SK-N-SH (cell line): ENCODE measurements at regions of chr19 and their contacts with region 1.

Region 1: GRCh38 chr19:12736995-12737834 is at the start of gene GET3:
- DNase-seq: peak; percentile 86
- H3K4me3 ChIP-seq: peak within 1 kb of the TSS; percentile 83 to 84
- H3K27ac ChIP-seq: peak within 1 kb of the TSS; percentile 84 to 96
- H3K4me1 ChIP-seq: peaks cover 9 to 28% of the 10 kb centered on the region in 2 experiments; a peak in 1 of 4 replicates
- H3K27me3 ChIP-seq: no peaks in the 10 kb centered on the region
- CTCF ChIP-seq: no peak
- EP300 ChIP-seq: no peak
- RAD21 ChIP-seq: no peak
- polyA plus RNA-seq, gene GET3: 250 and 264 TPM in 2 replicates

Region 2: DNA sequence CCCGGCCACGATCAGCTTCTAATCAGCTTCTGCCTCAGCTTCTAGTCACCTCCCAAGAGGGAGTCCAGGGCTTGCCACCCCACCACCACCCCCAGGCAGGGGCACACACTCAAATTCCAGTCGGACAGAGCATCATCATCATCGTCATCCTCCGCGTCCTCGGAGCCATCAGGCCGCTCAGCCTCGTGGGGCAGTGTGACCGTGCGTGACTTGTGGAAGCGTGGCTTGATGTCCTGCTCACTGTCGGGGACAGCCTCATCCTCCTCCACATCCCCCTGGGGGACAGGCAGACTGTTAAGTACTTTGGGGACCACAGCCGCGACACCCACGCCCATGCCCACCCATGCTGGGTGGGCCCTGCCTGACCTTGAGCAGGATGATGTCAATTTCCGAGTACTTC is 26.0 kb before region 1 on chr19:
- CTCF ChIA-PET with region 1: no interaction called
- POLR2A ChIA-PET with region 1: no interaction called
- DNase-seq: no peak
- H3K4me3 ChIP-seq: no peak overlapping the region
- H3K27ac ChIP-seq: no peak overlapping the region
- H3K4me1 ChIP-seq: no peaks in the 10 kb centered on the region
- H3K27me3 ChIP-seq: no peaks in the 10 kb centered on the region
- CTCF ChIP-seq: no peak
- EP300 ChIP-seq: no peak
- RAD21 ChIP-seq: no peak

Region 3: GRCh38 chr19:12722566-12723380 is 14.4 kb before region 1 on chr19:
- CTCF ChIA-PET with region 1: interaction called, 25 read pairs
- POLR2A ChIA-PET with region 1: interaction called, 6 read pairs
- DNase-seq: peak; percentile 96
- H3K4me3 ChIP-seq: peak overlapping the region; percentile 63 to 85
- H3K27ac ChIP-seq: peak overlapping the region; percentile 89
- H3K4me1 ChIP-seq: peaks cover 7 to 8% of the 10 kb centered on the region in 2 experiments; a peak in 3 of 4 replicates
- H3K27me3 ChIP-seq: no peaks in the 10 kb centered on the region
- CTCF ChIP-seq: no peak
- EP300 ChIP-seq: no peak
- RAD21 ChIP-seq: no peak

Region 4: DNA sequence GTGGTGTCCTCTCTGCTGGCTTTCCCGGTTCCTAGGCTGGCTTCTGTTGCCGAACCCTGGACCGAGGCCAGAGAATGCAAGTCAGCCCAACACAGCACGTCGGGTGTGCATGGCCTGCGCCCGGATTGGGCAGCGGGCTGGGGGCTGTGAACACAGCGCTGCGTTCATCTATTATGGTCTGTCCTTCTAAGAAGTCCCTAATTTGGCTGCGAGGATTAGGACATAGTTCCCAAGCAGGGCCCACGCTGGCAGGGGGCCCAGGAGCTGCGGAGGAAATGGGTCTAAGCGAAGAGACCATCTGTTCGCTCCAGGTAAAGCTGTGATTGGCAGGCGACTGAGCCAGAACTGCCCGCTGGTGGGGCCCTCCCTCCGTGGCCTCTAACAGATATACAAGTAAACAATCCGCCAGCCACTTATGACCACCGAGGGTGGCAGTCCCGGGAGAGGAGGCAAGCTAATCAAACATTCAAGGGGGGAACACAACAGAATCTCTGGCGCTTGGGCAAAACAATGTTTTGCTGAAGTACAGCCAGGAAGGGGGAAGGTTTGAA is 175.9 kb after region 1 on chr19:
- CTCF ChIA-PET with region 1: no interaction called
- POLR2A ChIA-PET with region 1: no interaction called
- DNase-seq: peak; percentile 77
- H3K4me3 ChIP-seq: no peak overlapping the region
- H3K27ac ChIP-seq: peak overlapping the region in 1 of 2 experiments; percentile 78; a peak in 2 of 4 replicates
- H3K4me1 ChIP-seq: peaks cover 5 to 22% of the 10 kb centered on the region in 2 experiments; a peak in 3 of 4 replicates
- H3K27me3 ChIP-seq: no peaks in the 10 kb centered on the region
- CTCF ChIP-seq: no peak
- EP300 ChIP-seq: no peak
- RAD21 ChIP-seq: no peak